Left cardiac atrium (tissue), 4 donors: ENCODE measurements at regions of chr4 and their contacts with region 1.

Region 1: DNA sequence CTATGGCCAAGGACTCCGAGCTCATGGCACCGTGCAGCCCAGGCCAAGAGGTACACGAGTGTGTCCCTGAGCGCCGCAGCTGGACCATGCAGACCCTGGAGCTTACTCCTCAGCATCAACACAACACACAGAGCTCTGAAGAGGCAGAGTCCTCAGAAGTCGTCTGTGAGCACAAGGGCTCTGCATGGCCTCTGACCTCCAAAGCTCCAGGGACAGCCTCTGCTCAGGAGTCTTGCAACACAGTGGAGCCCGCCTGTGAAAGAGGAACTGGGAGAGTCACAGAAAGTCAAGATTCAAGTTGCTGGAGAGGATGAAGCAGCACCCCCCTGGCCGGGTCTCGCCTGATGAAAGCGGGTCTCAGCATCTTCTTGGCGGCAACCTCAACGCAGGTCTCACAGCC is 2.9 kb downstream of the LRPAP1 start:
- DNase-seq: peak; percentile 59
- ATAC-seq: no peak

Region 2: GRCh38 chr4:3477750-3478430 is 51.5 kb before region 1 on chr4:
- intact Hi-C with region 1: loop called in 1 of 2 experiments (anchors 5 kb)
- DNase-seq: no peak
- ATAC-seq: no peak

Region 3: DNA sequence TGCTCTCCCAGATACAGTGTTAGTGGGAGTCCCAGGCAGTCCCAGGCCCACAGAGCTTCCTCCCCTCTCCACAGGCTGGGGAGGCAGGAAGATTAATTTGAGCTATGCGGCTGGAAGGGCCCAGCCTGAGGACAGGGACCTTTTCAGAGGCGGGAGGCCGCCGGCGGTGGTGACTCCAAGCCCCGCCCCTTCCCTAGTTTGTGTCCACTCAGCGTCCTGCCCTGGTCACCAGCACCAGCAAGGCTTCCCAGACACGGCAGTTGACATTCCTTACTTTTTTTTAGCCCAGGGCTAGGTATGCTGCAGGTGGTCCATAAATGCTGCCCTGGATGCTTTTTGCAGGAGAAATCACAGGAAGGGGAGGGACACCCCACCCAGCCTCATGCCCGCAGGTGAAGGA is 70.6 kb after region 1 on chr4:
- intact Hi-C with region 1: no loop called
- DNase-seq: no peak
- ATAC-seq: no peak